Brain microvascular endothelial cell (primary cell): ENCODE measurements at regions of chr11 and their contacts with region 1.

Region 1: GRCh38 chr11:131910523-131911387 is 540.3 kb downstream of the NTM start:
- DNase-seq: peak; percentile 47
- H3K4me3 ChIP-seq: peak overlapping the region; percentile 95
- H3K27ac ChIP-seq: peak overlapping the region; percentile 92
- H3K27me3 ChIP-seq: no peaks in the 10 kb centered on the region
- CTCF ChIP-seq: no peak

Region 2: GRCh38 chr11:131748151-131749050 is 162.4 kb before region 1 on chr11:
- in situ Hi-C with region 1: loop called (anchors 25 kb)
- DNase-seq: peak; percentile 91
- H3K4me3 ChIP-seq: no peak overlapping the region
- H3K27ac ChIP-seq: peak overlapping the region; percentile 100
- H3K27me3 ChIP-seq: no peaks in the 10 kb centered on the region
- CTCF ChIP-seq: peak; percentile 88

Region 3: GRCh38 chr11:132114185-132114584 is 203.4 kb after region 1 on chr11:
- in situ Hi-C with region 1: loop called (anchors 25 kb)
- DNase-seq: no peak
- H3K4me3 ChIP-seq: no peak overlapping the region
- H3K27ac ChIP-seq: no peak overlapping the region
- H3K27me3 ChIP-seq: no peaks in the 10 kb centered on the region
- CTCF ChIP-seq: peak; percentile 67